ENCODE measurements at regions of chr6 and their contacts with region 1.

Region 1: GRCh38 chr6:26342106-26343004 is 22.6 kb upstream of the BTN3A2 start:
- DNase-seq: no peak
- ATAC-seq: peak; percentile 33
- H3K4me3 ChIP-seq: peak overlapping the region; percentile 30 to 42
- H3K27ac ChIP-seq: peak overlapping the region; percentile 9; the same call in 1 of the 2 replicates
- H3K4me1 ChIP-seq: peaks cover 13 to 23% of the 10 kb centered on the region in 2 experiments
- H3K27me3 ChIP-seq: no peaks in the 10 kb centered on the region
- CTCF ChIP-seq: no peak
- POLR2A ChIP-seq: no peak
- RAD21 ChIP-seq: 0 out of 2 replicates have a peak, but pooled peaks have one; percentile 10

Region 2: GRCh38 chr6:26421259-26422144 is 79.1 kb after region 1 on chr6:
- CTCF ChIA-PET with region 1: interaction called, 7 read pairs
- POLR2A ChIA-PET with region 1: no interaction called
- RAD21 ChIA-PET with region 1: interaction called, 3 read pairs
- intact Hi-C with region 1: loop called (anchors 1 kb)
- DNase-seq: peak; percentile 86
- ATAC-seq: peak; percentile 98
- H3K4me3 ChIP-seq: peak overlapping the region; percentile 84 to 93
- H3K27ac ChIP-seq: peak overlapping the region; percentile 69
- H3K4me1 ChIP-seq: peaks cover 4 to 7% of the 10 kb centered on the region in 2 experiments; a peak in 3 of 4 replicates
- H3K27me3 ChIP-seq: no peaks in the 10 kb centered on the region
- CTCF ChIP-seq: no peak
- POLR2A ChIP-seq: peak; percentile 74
- RAD21 ChIP-seq: no peak

Region 3: GRCh38 chr6:26439657-26440056 is 97.3 kb after region 1 on chr6:
- CTCF ChIA-PET with region 1: no interaction called
- POLR2A ChIA-PET with region 1: no interaction called
- RAD21 ChIA-PET with region 1: no interaction called
- intact Hi-C with region 1: no loop called
- DNase-seq: no peak
- ATAC-seq: no peak
- H3K4me3 ChIP-seq: peak overlapping the region; percentile 38 to 52
- H3K27ac ChIP-seq: no peak overlapping the region; the same call in 1 of the 2 replicates
- H3K4me1 ChIP-seq: peaks cover 0 to 13% of the 10 kb centered on the region in 2 experiments; a peak in 3 of 4 replicates
- H3K27me3 ChIP-seq: no peaks in the 10 kb centered on the region
- CTCF ChIP-seq: no peak
- POLR2A ChIP-seq: no peak
- RAD21 ChIP-seq: no peak

Region 4: DNA sequence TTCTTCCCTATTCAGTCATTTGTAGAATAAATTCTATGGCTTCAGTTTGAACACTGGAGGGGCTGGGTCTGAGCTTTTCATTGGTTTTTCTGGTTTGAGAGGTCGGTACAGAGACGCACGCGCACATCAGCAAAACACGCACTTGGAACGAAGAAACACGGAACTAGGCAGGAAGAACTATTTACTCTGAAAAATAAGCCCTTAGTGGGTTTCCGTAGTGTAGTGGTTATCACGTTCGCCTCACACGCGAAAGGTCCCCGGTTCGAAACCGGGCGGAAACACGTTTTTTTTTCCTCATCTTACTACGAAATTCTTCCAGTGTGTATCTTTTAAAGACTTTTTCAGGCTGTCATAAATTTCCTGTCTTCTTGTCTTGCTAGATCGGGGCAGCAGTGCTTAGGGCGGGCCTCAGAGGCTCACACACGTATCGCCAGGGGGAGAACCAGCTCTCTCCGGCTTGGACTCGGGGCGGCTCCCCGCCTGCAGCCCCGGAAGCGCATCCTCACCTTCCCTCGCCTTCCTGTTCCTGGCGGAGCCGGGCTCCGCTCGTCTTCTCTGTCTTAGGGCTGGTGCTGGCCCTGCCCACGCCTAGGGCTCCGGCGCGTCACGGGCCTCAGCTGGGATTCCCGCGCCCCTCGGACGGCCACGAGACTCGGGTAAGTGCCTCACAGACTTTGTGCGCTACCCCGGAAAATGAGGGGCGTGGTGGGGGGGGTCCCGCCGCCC is 195.7 kb after region 1 on chr6 and contains the start of gene HMGN4:
- CTCF ChIA-PET with region 1: interaction called, 7 read pairs
- POLR2A ChIA-PET with region 1: interaction called, 3 read pairs
- RAD21 ChIA-PET with region 1: interaction called, 5 to 10 read pairs
- intact Hi-C with region 1: loop called (anchors 2 kb)
- DNase-seq: peak; percentile 81
- ATAC-seq: peak; percentile 73
- H3K4me3 ChIP-seq: peak within 1 kb of the TSS; percentile 74 to 89
- H3K27ac ChIP-seq: peak within 1 kb of the TSS; percentile 72
- H3K4me1 ChIP-seq: peaks cover 14 to 51% of the 10 kb centered on the region in 2 experiments
- H3K27me3 ChIP-seq: no peaks in the 10 kb centered on the region
- CTCF ChIP-seq: no peak
- POLR2A ChIP-seq: no peak
- RAD21 ChIP-seq: 0 out of 2 replicates have a peak, but pooled peaks have one; percentile 17
- total RNA-seq, gene HMGN4: 73.8 TPM

Region 5: GRCh38 chr6:26568601-26569432 is 226.5 kb after region 1 on chr6:
- CTCF ChIA-PET with region 1: interaction called, 8 read pairs
- POLR2A ChIA-PET with region 1: interaction called, 4 read pairs
- RAD21 ChIA-PET with region 1: interaction called in 1 of 2 experiments, 4 read pairs
- intact Hi-C with region 1: loop called (anchors 1 kb)
- DNase-seq: peak; percentile 92
- ATAC-seq: peak; percentile 48
- H3K4me3 ChIP-seq: peak overlapping the region; percentile 35 to 51
- H3K27ac ChIP-seq: no peak overlapping the region
- H3K4me1 ChIP-seq: peaks cover 2 to 59% of the 10 kb centered on the region in 2 experiments; a peak in 3 of 4 replicates
- H3K27me3 ChIP-seq: no peaks in the 10 kb centered on the region
- CTCF ChIP-seq: no peak
- POLR2A ChIP-seq: no peak
- RAD21 ChIP-seq: peak; percentile 4; the same call in 1 of the 2 replicates

Region 6: DNA sequence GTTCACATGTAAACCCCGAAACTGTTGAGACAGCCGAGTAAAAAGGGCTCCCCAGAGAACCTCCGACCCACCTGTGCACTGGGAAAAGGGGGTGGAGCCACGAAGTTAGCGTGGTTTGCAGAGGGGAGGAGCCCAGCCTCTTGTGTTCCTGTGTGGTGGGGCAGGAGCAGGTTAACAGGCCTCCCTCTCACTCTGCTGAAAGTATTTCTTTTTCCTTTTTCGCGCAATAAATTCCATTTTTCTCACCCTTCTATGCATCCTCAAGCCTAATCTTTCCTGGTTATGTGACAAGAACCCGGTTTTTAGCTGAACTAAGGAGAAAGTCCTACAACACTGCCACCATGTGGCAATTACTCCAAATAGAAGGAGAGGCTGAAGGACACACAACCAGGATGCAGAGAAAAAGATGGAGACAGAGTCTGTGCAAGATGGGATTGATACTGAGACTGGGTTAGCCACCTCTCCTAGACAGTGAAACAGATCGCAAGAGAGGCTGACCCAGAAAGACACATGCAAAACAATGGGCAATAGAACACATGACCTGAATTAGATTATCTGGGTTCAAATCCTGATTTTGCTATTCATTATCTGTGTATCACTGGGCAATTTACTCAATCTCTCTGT is 736.5 kb after region 1 on chr6:
- CTCF ChIA-PET with region 1: no interaction called
- POLR2A ChIA-PET with region 1: no interaction called
- RAD21 ChIA-PET with region 1: no interaction called
- intact Hi-C with region 1: loop called (anchors 2 kb)
- DNase-seq: peak; percentile 52
- ATAC-seq: peak; percentile 99
- H3K4me3 ChIP-seq: peak overlapping the region; percentile 34 to 47
- H3K27ac ChIP-seq: no peak overlapping the region
- H3K4me1 ChIP-seq: peaks cover 0 to 10% of the 10 kb centered on the region in 2 experiments; a peak in 2 of 4 replicates
- H3K27me3 ChIP-seq: no peaks in the 10 kb centered on the region
- CTCF ChIP-seq: peak; percentile 72 to 90 (median 80)
- POLR2A ChIP-seq: no peak
- RAD21 ChIP-seq: peak; percentile 90